Activated T-helper 2 cell treated with anti-CD3 and anti-CD28 coated beads, Interferon-gamma antibody, Interleukin-2, Interleukin-4, amounts not matched to agents 10 μg/mL and 5 μg/mL and 100 μg/mL, durations not matched to agents 14 hours and 24 hours and 36 hours (primary cell): ENCODE measurements at regions of chr16 and their contacts with region 1.

Region 1: GRCh38 chr16:11328172-11329070 is 16.8 kb upstream of the RMI2 start:
- DNase-seq: peak; percentile 45
- H3K4me3 Mint-ChIP-seq: peak overlapping the region; percentile 35
- H3K27ac Mint-ChIP-seq: peak overlapping the region; percentile 58
- H3K4me1 Mint-ChIP-seq: peaks cover 47% of the 10 kb centered on the region
- H3K27me3 Mint-ChIP-seq: no peaks in the 10 kb centered on the region

Region 2: GRCh38 chr16:11263737-11264136 is 64.7 kb before region 1 on chr16:
- intact Hi-C with region 1: loop called (anchors 1 kb)
- DNase-seq: peak; percentile 51
- H3K4me3 Mint-ChIP-seq: peak overlapping the region; percentile 48
- H3K27ac Mint-ChIP-seq: peak overlapping the region; percentile 84
- H3K4me1 Mint-ChIP-seq: peaks cover 33% of the 10 kb centered on the region
- H3K27me3 Mint-ChIP-seq: no peaks in the 10 kb centered on the region

Region 3: DNA sequence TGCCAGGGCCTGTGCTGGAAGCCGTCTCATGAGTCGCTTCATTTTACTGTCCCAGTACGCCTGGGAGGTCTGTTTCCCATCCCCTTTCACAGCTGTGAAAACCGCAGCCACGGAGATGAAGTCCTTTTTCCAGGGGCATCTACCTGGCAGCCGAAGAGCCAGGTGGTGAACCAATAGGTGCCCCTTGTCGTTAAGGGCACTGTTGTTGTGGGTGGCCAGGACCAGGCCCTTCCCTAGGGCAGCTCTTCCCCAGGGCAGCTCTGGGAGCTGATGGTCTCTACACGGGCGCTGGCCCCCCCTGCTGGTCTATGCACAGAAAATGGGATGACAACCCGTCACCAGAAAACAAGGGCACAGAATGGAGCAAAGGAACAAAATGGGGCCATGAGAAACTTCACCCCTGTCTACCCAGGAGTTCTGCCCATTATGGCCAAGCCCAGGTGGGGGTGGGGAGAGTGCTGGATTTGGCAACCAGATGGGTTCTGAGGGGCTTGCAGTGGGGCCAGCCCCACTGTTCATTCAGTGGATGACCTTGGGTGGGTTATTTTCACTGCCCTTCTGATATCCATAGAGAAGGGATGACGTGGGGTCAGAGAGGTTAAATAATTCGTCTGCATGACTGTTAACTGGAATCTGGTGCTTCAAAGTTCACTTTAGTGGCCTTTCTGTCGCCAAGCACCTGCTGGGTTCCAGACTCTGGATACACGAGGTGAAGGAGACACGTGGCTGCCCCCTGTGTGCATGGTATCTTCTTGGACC is 28.3 kb after region 1 on chr16:
- intact Hi-C with region 1: loop called (anchors 2 kb)
- DNase-seq: peak; percentile 33
- H3K4me3 Mint-ChIP-seq: no peak overlapping the region
- H3K27ac Mint-ChIP-seq: no peak overlapping the region
- H3K4me1 Mint-ChIP-seq: peaks cover 68% of the 10 kb centered on the region
- H3K27me3 Mint-ChIP-seq: no peaks in the 10 kb centered on the region

Region 4: GRCh38 chr16:11370084-11370931 is 41.9 kb after region 1 on chr16:
- intact Hi-C with region 1: no loop called
- DNase-seq: no peak
- H3K4me3 Mint-ChIP-seq: no peak overlapping the region
- H3K27ac Mint-ChIP-seq: no peak overlapping the region
- H3K4me1 Mint-ChIP-seq: peaks cover 11% of the 10 kb centered on the region
- H3K27me3 Mint-ChIP-seq: no peaks in the 10 kb centered on the region